GM12878 (cell line): ENCODE measurements at regions of chr13 and their contacts with region 1.

Region 1: GRCh38 chr13:28324181-28324789 is 170.6 kb downstream of the FLT1 start:
- DNase-seq: peak; percentile 45
- ATAC-seq: peak; percentile 96
- H3K4me3 ChIP-seq: no peak overlapping the region
- H3K27ac ChIP-seq: no peak overlapping the region
- H3K4me1 ChIP-seq: no peaks in the 10 kb centered on the region
- H3K27me3 ChIP-seq: no peaks in the 10 kb centered on the region
- CTCF ChIP-seq: peak; percentile 77 to 91 (median 85)
- EP300 ChIP-seq: no peak
- POLR2A ChIP-seq: no peak
- RAD21 ChIP-seq: peak; percentile 97

Region 2: GRCh38 chr13:28031220-28031895 is 292.9 kb before region 1 on chr13:
- CTCF ChIA-PET with region 1: no interaction called
- POLR2A ChIA-PET with region 1: no interaction called
- RAD21 ChIA-PET with region 1: no interaction called
- SMC1A ChIA-PET with region 1: no interaction called
- in situ Hi-C with region 1: no loop called
- intact Hi-C with region 1: no loop called
- DNase-seq: no peak
- ATAC-seq: peak; percentile 69
- H3K4me3 ChIP-seq: no peak overlapping the region
- H3K27ac ChIP-seq: peak overlapping the region; percentile 36; the same call in 1 of the 2 replicates
- H3K4me1 ChIP-seq: peaks cover 52% of the 10 kb centered on the region
- H3K27me3 ChIP-seq: no peaks in the 10 kb centered on the region
- CTCF ChIP-seq: no peak
- EP300 ChIP-seq: peak in 1 of 2 experiments; percentile 46; a peak in 1 of 4 replicates
- POLR2A ChIP-seq: no peak
- RAD21 ChIP-seq: 0 out of 2 replicates have a peak, but pooled peaks have one; percentile 1

Region 3: DNA sequence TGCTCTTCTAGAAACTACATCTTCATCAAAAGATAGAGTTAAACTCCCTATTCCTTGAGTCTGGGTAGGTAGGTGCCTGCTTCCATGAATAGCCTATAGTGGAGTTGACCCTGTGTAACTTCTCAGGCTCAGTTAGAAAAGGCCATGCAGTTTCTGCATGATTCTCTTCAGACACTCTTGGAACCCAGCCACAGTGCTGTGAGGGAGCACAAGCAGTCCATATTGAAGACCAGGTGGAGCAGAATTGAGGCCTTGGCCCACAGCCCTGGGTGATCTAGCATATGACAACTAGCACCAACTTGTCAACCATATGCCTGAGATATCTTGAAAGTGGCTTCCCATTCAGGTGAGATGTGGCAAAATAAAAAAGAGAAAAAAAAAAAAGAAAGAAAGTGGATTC is 196.3 kb before region 1 on chr13:
- CTCF ChIA-PET with region 1: no interaction called
- POLR2A ChIA-PET with region 1: no interaction called
- RAD21 ChIA-PET with region 1: no interaction called
- SMC1A ChIA-PET with region 1: no interaction called
- in situ Hi-C with region 1: no loop called
- intact Hi-C with region 1: no loop called
- DNase-seq: no peak
- ATAC-seq: no peak
- H3K4me3 ChIP-seq: no peak overlapping the region
- H3K27ac ChIP-seq: no peak overlapping the region
- H3K4me1 ChIP-seq: no peaks in the 10 kb centered on the region
- H3K27me3 ChIP-seq: no peaks in the 10 kb centered on the region
- CTCF ChIP-seq: no peak
- EP300 ChIP-seq: no peak
- POLR2A ChIP-seq: no peak
- RAD21 ChIP-seq: no peak

Region 4: GRCh38 chr13:28475916-28476725 is 151.8 kb after region 1 on chr13:
- CTCF ChIA-PET with region 1: no interaction called
- POLR2A ChIA-PET with region 1: no interaction called
- RAD21 ChIA-PET with region 1: no interaction called
- SMC1A ChIA-PET with region 1: interaction called, 3 read pairs
- in situ Hi-C with region 1: no loop called
- intact Hi-C with region 1: loop called (anchors 10 kb)
- DNase-seq: no peak
- ATAC-seq: no peak
- H3K4me3 ChIP-seq: no peak overlapping the region
- H3K27ac ChIP-seq: no peak overlapping the region
- H3K4me1 ChIP-seq: no peaks in the 10 kb centered on the region
- H3K27me3 ChIP-seq: no peaks in the 10 kb centered on the region; a peak in 1 of 4 replicates
- CTCF ChIP-seq: no peak
- EP300 ChIP-seq: no peak
- POLR2A ChIP-seq: no peak
- RAD21 ChIP-seq: no peak

Region 5: GRCh38 chr13:28658796-28659620 is 334.7 kb after region 1 on chr13 and contains the start of gene POMP:
- CTCF ChIA-PET with region 1: interaction called, 16 read pairs
- POLR2A ChIA-PET with region 1: interaction called, 3 read pairs
- RAD21 ChIA-PET with region 1: interaction called, 5 read pairs
- SMC1A ChIA-PET with region 1: interaction called, 9 read pairs
- in situ Hi-C with region 1: no loop called
- intact Hi-C with region 1: loop called (anchors 5 kb)
- DNase-seq: peak; percentile 82
- ATAC-seq: peak; percentile 85
- H3K4me3 ChIP-seq: peak within 1 kb of the TSS; percentile 80
- H3K27ac ChIP-seq: peak within 1 kb of the TSS; percentile 99
- H3K4me1 ChIP-seq: 0 out of 2 replicates have a peak, but pooled peaks cover 4% of the 10 kb centered on the region
- H3K27me3 ChIP-seq: no peaks in the 10 kb centered on the region
- CTCF ChIP-seq: no peak
- EP300 ChIP-seq: peak in 1 of 2 experiments; percentile 63; a peak in 2 of 4 replicates
- POLR2A ChIP-seq: peak; percentile 99
- RAD21 ChIP-seq: 0 out of 2 replicates have a peak, but pooled peaks have one; percentile 4
- polyA plus RNA-seq, gene POMP: 655 to 668 TPM

Region 6: GRCh38 chr13:28796938-28797257 is 472.6 kb after region 1 on chr13:
- CTCF ChIA-PET with region 1: interaction called, 7 read pairs
- POLR2A ChIA-PET with region 1: no interaction called
- RAD21 ChIA-PET with region 1: interaction called, 5 read pairs
- SMC1A ChIA-PET with region 1: interaction called, 28 read pairs
- in situ Hi-C with region 1: loop called (anchors 5 kb)
- intact Hi-C with region 1: loop called (anchors 1 kb)
- DNase-seq: no peak
- ATAC-seq: peak; percentile 34; the same call in 2 of the 3 replicates
- H3K4me3 ChIP-seq: no peak overlapping the region
- H3K27ac ChIP-seq: no peak overlapping the region
- H3K4me1 ChIP-seq: no peaks in the 10 kb centered on the region
- H3K27me3 ChIP-seq: no peaks in the 10 kb centered on the region; a peak in 1 of 4 replicates
- CTCF ChIP-seq: no peak
- EP300 ChIP-seq: no peak
- POLR2A ChIP-seq: no peak
- RAD21 ChIP-seq: no peak